ENCODE measurements at regions of chr12 and their contacts with region 1.

Region 1: DNA sequence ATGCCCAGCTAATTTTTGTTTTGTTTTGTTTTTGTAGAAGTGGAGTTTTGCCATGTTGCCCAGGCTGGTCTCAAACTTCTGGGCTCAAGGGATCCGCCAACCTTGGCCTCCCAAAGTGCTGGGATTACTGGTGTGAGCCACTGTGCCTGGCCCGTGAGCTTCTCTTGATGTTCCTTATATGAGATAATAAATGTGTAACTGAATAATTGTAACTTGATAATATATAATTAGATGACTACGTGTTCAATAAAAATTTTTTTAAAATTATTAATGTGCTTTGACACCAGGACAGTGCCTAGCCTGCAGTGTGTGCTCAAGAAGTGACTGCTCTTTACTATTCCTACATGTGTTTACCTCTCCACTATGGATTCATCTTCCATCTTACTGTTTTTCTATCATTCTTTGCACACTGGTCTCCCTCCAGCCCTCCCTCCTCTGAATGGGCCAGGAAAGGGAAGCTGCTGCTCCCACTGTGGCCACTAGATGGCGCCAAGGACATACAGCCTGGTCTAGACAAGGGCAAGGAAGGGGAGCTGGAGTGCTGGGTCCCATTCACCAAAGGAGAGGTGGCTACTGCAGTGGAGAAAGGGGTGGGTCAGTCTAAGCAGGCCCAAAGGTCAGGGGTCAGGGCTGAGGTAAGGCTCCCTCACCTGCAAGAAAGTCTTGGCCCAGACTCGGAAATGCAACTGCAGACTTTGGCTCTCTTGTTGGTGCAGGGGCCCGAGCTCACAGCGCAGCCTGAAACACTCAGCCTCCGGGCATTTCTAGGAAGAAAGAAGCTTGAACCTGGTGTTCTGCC is 14.7 kb upstream of the ZNF385A start:
- DNase-seq: peak; percentile 84
- CTCF ChIP-seq: peak; percentile 100

Region 2: GRCh38 chr12:54359033-54359761 is 40.0 kb before region 1 on chr12:
- CTCF ChIA-PET with region 1: interaction called, 10 read pairs
- POLR2A ChIA-PET with region 1: no interaction called
- DNase-seq: peak; percentile 97
- CTCF ChIP-seq: no peak

Region 3: GRCh38 chr12:54368709-54369583 is 30.2 kb before region 1 on chr12:
- CTCF ChIA-PET with region 1: interaction called, 13 read pairs
- POLR2A ChIA-PET with region 1: no interaction called
- DNase-seq: peak; percentile 82
- CTCF ChIP-seq: peak; percentile 96

Region 4: DNA sequence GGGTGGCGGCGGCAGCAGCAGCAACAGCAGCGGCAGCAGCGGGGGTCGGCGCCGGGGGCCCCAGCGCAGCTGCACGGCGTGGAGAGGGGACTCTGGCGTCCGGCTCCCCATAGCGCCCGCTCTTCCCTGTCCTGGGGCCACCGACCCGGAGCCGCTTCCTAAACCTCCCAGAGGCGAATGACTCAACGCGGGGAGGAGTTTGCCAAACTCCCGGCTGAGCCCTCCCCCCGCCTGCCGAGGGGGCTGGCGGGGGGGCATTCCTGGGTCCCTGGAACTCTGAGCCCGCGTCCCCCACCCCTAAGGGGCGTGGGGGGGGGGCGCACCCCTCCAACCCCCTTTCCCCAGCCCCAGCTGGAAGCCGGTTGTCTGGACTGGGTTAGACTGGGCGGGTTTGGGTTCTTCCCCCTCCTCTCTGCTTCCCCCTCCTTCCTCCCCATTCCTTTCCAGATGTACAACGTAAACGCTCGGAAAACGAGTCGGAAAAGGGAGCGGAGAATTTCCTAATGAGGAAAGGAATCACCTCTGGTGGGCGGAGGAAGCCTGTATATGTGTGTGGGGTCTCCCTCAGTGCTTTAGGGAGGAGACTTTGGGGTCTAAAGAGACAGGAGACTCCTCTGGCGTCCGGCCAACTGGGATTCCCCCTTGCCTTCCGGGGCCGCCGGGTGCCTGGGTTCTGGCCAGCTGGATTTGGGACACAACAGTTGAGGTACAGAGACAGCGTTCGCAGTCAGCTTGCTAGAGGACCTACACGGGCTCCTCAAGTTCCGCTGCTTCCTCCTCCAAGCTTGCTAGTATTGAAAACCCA is 20.1 kb after region 1 on chr12 and contains the start of gene ITGA5:
- CTCF ChIA-PET with region 1: interaction called, 506 read pairs
- POLR2A ChIA-PET with region 1: no interaction called
- DNase-seq: no peak
- CTCF ChIP-seq: no peak

Region 5: GRCh38 chr12:54439521-54440255 is 40.5 kb after region 1 on chr12:
- CTCF ChIA-PET with region 1: interaction called, 506 read pairs
- POLR2A ChIA-PET with region 1: no interaction called
- DNase-seq: peak; percentile 70
- CTCF ChIP-seq: peak; percentile 72

Region 6: DNA sequence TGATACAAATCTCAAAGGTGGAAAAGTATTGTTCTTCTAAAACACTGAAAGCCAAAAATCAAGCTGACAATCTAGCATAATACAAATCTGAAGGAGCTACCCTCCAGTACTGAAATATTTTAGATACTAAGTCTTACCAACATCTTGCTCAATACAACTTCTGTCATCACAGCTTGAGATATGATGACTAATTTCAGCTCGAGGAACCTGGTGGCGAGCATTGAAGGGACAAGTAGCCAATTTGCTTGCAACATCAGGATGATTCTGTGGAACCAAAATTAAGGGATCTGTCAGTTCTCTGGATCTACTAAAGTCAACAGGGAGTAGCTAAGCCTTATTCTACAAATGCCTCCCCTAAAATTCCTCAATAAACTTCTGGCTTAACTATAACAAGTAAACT is 63.8 kb after region 1 on chr12:
- CTCF ChIA-PET with region 1: interaction called, 13 read pairs
- POLR2A ChIA-PET with region 1: no interaction called
- DNase-seq: no peak
- CTCF ChIP-seq: no peak

Region 7: GRCh38 chr12:54497883-54498282 is 98.7 kb after region 1 on chr12:
- CTCF ChIA-PET with region 1: interaction called, 13 read pairs
- POLR2A ChIA-PET with region 1: interaction called, 3 read pairs
- DNase-seq: no peak
- CTCF ChIP-seq: no peak

Measured in GM10248 (cell line).